Stomach (tissue), 19 donors: ENCODE measurements at regions of chr11 and their contacts with region 1.

Region 1: DNA sequence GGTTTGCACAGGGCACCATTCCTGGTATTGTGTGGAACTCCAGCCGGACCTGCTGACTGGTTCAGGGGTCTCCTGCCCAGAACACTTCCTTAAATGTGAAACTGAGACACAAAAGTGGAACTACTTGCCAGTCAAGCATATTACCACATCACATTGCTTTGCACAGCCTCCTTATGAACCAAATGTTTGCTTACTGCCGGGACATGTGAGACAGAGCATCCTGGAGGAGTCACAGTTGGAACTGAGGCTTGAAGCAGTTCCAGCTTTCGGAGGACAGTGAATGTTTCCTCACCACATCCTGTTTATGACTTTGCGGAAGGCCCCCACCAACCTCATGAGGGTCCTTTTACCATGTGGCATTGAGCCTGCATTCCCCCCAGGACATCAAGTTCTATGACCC is 105.8 kb upstream of the ARHGAP42 start:
- DNase-seq: peak in 1 of 2 donors; percentile 28
- H3K4me3 ChIP-seq: no peak overlapping the region
- H3K27ac ChIP-seq: no peak overlapping the region
- H3K4me1 ChIP-seq: peaks cover 0 to 9% (median 4%) of the 10 kb centered on the region in 4 donors
- H3K27me3 ChIP-seq: no peaks in the 10 kb centered on the region
- CTCF ChIP-seq: no peak
- EP300 ChIP-seq: no peak
- POLR2A ChIP-seq: no peak

Region 2: GRCh38 chr11:100687630-100688395 is 106.5 kb after region 1 on chr11:
- intact Hi-C with region 1: loop called (anchors 10 kb)
- DNase-seq: peak; percentile 48 to 91
- H3K4me3 ChIP-seq: peak overlapping the region; percentile 74 to 77 (median 76)
- H3K27ac ChIP-seq: peak overlapping the region; percentile 75 to 96 (median 88)
- H3K4me1 ChIP-seq: peaks cover 6 to 75% (median 33%) of the 10 kb centered on the region in 4 donors
- H3K27me3 ChIP-seq: peaks cover 0 to 7% (median 0%) of the 10 kb centered on the region in 3 donors
- CTCF ChIP-seq: peak in 5 of 7 experiments; percentile 47 to 69 (median 57)
- EP300 ChIP-seq: no peak
- POLR2A ChIP-seq: peak in 1 of 4 donors; percentile 21

Region 3: GRCh38 chr11:100841711-100842407 is 260.5 kb after region 1 on chr11:
- intact Hi-C with region 1: no loop called
- DNase-seq: no peak
- H3K4me3 ChIP-seq: no peak overlapping the region
- H3K27ac ChIP-seq: no peak overlapping the region
- H3K4me1 ChIP-seq: peaks cover 0 to 20% (median 5%) of the 10 kb centered on the region in 4 donors
- H3K27me3 ChIP-seq: no peaks in the 10 kb centered on the region
- CTCF ChIP-seq: no peak
- EP300 ChIP-seq: no peak
- POLR2A ChIP-seq: no peak